Activated CD8-positive, alpha-beta T cell treated with anti-CD3 and anti-CD28 coated beads, Interleukin-2, amount 10 ng/mL, durations not matched to agents 7 days and 5 days (primary cell): ENCODE measurements at regions of chr3 and their contacts with region 1.

Region 1: DNA sequence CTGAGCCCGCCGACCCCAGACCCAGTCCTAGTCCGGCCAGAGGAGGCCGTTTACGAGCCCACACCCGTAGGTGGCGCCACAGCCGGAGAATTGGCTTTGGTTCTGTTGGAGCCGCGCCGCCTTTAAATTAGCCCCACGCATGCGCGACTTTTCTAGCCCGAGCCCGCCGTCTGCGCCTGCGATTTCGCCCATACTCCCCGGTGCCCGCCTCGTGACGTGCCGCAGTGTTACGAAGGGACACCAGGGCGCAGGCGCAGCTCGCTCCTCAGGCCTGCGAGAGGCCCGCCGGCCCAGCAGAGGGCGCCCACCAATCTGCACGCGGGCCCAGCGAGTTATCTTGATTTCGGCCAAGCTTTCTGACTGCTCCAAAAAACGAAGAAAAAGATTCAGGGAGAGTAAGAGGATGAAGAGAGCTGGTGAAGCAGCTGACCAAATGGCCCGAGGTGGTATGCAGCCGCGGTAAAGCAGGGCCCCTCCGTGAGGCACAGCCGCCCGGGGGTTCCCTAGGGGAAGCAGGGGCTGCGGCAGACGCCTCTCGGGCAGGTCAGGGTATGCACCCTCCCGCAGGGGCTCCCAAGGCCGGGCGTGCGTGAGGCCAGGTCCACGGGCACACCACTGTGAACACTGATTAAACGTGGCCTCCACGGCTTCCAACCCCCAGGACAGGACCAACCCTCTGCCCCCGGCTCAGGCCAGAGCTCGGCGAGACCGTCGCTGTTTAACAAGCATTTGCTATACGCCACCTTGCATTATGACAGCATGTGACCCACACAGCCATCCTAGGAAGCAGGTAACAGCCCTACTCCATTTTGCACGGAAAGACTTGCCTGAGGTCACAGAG is 32.8 kb downstream of the RPN1 start:
- DNase-seq: peak; percentile 99
- ATAC-seq: peak; percentile 94
- H3K4me3 Mint-ChIP-seq: peak overlapping the region; percentile 85
- H3K27ac Mint-ChIP-seq: peak overlapping the region; percentile 88
- H3K4me1 Mint-ChIP-seq: peaks cover 46% of the 10 kb centered on the region
- H3K27me3 Mint-ChIP-seq: no peaks in the 10 kb centered on the region

Region 2: DNA sequence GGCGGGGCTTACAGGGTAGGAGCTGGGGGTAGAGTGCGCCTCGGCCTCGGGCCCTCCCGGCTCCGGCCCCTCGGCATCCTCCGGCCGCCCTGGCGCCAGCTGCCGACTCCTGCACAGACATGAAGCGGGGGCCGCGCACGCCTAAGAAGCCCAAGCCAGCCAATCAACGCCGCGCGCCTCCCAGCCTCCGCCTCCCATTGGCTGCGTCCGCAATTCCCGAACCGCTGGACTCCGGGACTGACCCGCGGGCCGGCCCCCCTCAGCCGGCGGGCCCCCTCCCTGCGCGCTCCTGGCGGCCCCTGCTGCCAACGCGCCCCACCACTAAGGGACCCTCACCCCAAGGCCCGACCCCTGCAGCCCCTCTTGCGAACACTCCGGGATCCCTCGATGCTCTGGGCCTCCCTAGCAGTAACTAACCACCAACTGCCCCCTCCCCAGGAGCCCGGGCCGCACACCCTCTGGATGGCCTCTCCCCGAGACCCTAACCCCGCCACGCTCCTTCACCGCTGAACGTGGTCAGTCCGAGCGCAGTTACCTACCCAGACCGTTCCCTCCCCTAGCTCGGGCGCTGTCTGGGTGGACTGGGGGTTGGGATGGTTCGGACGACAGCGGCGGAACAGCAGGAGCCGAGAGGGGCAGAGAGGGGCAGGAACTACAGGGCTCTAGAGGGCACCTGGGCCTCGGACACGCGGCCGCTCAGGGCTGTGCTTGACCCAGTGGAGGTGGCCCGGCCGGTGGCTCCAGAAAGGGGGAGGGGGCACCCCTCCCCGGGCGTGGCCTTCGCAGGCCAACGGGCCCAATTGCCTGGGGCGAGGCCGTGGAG is 129.8 kb before region 1 on chr3:
- CTCF ChIA-PET with region 1: no interaction called
- POLR2A ChIA-PET with region 1: no interaction called
- DNase-seq: no peak
- ATAC-seq: peak; percentile 21
- H3K4me3 Mint-ChIP-seq: no peak overlapping the region
- H3K27ac Mint-ChIP-seq: no peak overlapping the region
- H3K4me1 Mint-ChIP-seq: peaks cover 30% of the 10 kb centered on the region
- H3K27me3 Mint-ChIP-seq: peaks cover 79% of the 10 kb centered on the region

Region 3: GRCh38 chr3:128590948-128591347 is 26.8 kb before region 1 on chr3:
- CTCF ChIA-PET with region 1: interaction called, 10 read pairs
- POLR2A ChIA-PET with region 1: no interaction called
- DNase-seq: no peak
- ATAC-seq: no peak
- H3K4me3 Mint-ChIP-seq: no peak overlapping the region
- H3K27ac Mint-ChIP-seq: no peak overlapping the region
- H3K4me1 Mint-ChIP-seq: peaks cover 21% of the 10 kb centered on the region
- H3K27me3 Mint-ChIP-seq: peaks cover 4% of the 10 kb centered on the region

Region 4: DNA sequence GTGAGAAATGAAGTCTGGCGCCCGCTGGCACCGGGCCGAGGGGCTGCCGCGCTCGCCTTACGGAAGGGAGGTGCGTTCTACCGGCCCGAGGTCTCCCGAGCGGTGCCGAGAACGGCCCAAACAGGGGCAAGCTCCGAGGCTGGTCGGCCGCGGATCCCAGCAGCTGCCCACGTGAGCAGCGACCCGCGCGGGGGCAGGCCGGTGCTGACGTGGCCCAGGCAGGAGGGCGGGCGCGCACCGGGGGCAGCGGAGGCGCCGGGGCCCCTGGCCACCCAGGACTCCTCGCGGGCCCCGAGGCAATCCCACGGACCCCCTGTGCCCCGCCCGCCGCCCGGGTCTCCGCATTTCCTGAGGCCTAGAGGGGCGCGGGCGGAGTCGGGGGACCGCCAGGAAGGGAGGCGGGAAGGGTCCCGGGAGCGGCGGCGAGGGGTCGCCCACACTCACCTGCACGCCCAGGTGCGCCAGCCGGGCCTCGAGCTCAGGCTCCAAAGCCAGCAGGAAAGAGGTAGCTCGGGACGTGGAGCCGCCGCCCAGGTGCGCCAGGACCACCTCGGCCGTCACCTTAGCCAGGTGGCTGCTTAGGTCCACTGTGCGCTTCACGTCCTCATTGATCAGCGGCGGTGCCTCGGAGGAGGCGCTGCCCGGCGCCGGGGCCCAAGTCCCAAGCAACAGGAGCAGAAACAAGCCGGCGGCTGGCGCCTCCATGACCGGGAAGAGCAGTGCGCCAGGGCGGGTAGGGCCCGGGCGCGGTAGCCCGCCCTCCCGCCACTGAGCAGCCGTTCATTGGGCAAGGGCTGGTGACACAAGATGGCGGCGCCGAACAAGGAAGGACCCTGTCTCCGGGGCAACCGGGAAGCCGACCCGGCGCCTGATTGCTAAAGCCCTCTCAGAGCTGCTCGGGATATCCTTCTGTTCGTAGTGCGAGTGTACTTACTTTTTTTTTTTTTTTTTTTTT is 32.6 kb after region 1 on chr3 and contains the start of gene RPN1:
- CTCF ChIA-PET with region 1: interaction called, 11 read pairs
- POLR2A ChIA-PET with region 1: interaction called, 13 read pairs
- DNase-seq: peak; percentile 96
- ATAC-seq: peak; percentile 98
- H3K4me3 Mint-ChIP-seq: peak within 1 kb of the TSS; percentile 88
- H3K27ac Mint-ChIP-seq: peak within 1 kb of the TSS; percentile 89
- H3K4me1 Mint-ChIP-seq: peaks cover 40% of the 10 kb centered on the region
- H3K27me3 Mint-ChIP-seq: no peaks in the 10 kb centered on the region
- total RNA-seq, gene RPN1: 157 to 162 TPM

Region 5: DNA sequence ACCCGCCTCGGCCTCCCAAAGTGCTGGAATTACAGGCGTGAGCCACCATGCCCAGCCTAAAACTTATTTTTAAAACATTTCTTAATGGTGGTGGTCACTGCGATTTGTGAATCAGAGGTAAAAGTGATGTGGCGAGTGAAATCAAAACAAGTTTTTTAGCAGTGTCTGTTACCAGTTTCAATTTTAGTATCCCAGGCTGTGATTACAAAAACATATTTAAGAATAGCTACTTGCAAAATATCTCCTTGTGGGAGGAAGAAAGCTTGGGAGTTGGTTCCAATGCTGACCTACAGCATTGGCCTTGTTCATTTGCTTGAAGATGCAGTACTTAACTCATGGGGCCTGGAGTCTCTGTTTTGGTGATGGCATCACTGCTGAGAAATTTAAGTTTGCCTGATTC is 112.7 kb after region 1 on chr3:
- CTCF ChIA-PET with region 1: no interaction called
- POLR2A ChIA-PET with region 1: no interaction called
- DNase-seq: no peak
- ATAC-seq: no peak
- H3K4me3 Mint-ChIP-seq: no peak overlapping the region
- H3K27ac Mint-ChIP-seq: peak overlapping the region; percentile 43
- H3K4me1 Mint-ChIP-seq: peaks cover 74% of the 10 kb centered on the region
- H3K27me3 Mint-ChIP-seq: no peaks in the 10 kb centered on the region

Region 6: GRCh38 chr3:128787256-128788240 is 169.8 kb after region 1 on chr3:
- CTCF ChIA-PET with region 1: interaction called, 18 read pairs
- POLR2A ChIA-PET with region 1: no interaction called
- DNase-seq: peak; percentile 53
- ATAC-seq: peak; percentile 64
- H3K4me3 Mint-ChIP-seq: peak overlapping the region; percentile 75
- H3K27ac Mint-ChIP-seq: peak overlapping the region; percentile 96
- H3K4me1 Mint-ChIP-seq: peaks cover 82% of the 10 kb centered on the region
- H3K27me3 Mint-ChIP-seq: no peaks in the 10 kb centered on the region

Region 7: GRCh38 chr3:128879125-128879969 is 261.6 kb after region 1 on chr3 and contains the start of gene ACAD9:
- CTCF ChIA-PET with region 1: interaction called, 17 read pairs
- POLR2A ChIA-PET with region 1: interaction called, 3 read pairs
- DNase-seq: peak; percentile 97
- ATAC-seq: peak; percentile 96
- H3K4me3 Mint-ChIP-seq: peak within 1 kb of the TSS; percentile 83
- H3K27ac Mint-ChIP-seq: peak within 1 kb of the TSS; percentile 90
- H3K4me1 Mint-ChIP-seq: peaks cover 57% of the 10 kb centered on the region
- H3K27me3 Mint-ChIP-seq: peaks cover 4% of the 10 kb centered on the region
- total RNA-seq, gene ACAD9: 61.3 to 68.3 TPM